ENCODE measurements at regions of chr16 and their contacts with region 1.

Region 1: GRCh38 chr16:11407047-11407982 is 62.1 kb downstream of the RMI2 start:
- DNase-seq: peak; percentile 77
- H3K4me3 Mint-ChIP-seq: no peak overlapping the region
- H3K27ac Mint-ChIP-seq: no peak overlapping the region
- H3K4me1 Mint-ChIP-seq: peaks cover 4% of the 10 kb centered on the region
- H3K27me3 Mint-ChIP-seq: peaks cover 27% of the 10 kb centered on the region

Region 2: DNA sequence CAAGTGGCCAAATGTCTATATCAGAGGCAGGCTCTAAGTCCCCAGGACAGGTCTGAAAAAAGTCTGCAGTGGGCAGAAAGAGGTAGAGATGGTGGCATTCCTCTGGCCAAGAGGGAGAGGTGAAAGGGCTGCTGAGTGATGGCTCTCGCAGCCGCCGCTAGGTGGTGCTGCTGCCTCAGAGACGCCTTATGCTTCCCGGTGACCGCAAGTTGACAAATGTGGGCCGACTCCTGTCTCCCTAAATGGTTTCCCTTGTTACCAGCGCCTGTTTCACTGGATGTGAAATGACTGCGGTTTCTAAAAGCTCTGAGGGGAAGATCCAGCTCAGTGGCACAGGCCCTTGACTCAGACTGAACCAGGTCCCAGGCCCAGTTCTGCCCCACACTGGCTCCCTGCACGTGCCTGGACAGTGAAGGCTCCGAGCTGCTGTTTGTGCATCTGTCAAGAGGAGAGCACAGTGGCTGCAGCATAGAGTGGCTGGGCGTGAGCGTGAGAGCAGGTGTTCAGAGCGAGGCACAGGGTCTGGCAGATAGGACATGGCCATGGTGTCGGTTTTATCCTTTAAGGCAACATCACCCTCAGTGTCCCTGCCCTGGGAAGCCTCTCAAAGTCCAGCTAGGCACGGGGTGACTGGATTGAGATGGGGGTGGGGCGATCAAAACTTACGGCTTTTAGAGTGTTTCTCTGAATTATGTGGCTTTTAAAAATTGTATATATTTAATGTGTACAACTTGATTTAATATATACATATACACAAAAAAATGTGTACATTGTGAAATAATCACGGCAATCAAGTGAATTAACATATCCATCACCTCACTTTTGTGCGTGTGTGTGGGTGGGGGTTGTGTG is 443.1 kb before region 1 on chr16:
- CTCF ChIA-PET with region 1: interaction called, 68 read pairs
- DNase-seq: peak; percentile 89
- H3K4me3 Mint-ChIP-seq: peak overlapping the region; percentile 36
- H3K27ac Mint-ChIP-seq: peak overlapping the region; percentile 90
- H3K4me1 Mint-ChIP-seq: peaks cover 69% of the 10 kb centered on the region
- H3K27me3 Mint-ChIP-seq: no peaks in the 10 kb centered on the region

Region 3: GRCh38 chr16:11370084-11370931 is 37.0 kb before region 1 on chr16:
- CTCF ChIA-PET with region 1: interaction called, 15 read pairs
- DNase-seq: peak; percentile 34
- H3K4me3 Mint-ChIP-seq: no peak overlapping the region
- H3K27ac Mint-ChIP-seq: no peak overlapping the region
- H3K4me1 Mint-ChIP-seq: peaks cover 22% of the 10 kb centered on the region
- H3K27me3 Mint-ChIP-seq: peaks cover 20% of the 10 kb centered on the region

Region 4: DNA sequence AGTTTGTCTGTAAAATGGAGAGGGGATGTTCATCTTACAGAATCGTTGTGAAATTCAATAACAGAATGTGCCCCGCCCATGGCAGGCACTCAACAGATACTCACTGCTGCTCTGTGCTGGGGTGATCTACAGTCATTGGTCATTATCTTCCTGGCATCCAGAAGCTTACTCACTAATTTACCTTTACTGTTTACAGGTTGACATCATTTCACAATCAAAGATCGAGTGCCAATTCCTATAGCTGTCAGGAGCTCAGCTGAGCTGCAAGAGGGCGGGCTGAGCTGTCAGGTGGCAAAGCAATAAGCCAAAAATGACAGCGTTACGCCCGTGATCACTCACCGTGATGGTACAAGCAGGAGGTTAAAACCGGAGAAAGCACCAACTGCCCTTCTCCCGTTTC is 128.2 kb after region 1 on chr16:
- CTCF ChIA-PET with region 1: interaction called, 26 read pairs
- DNase-seq: no peak
- H3K4me3 Mint-ChIP-seq: no peak overlapping the region
- H3K27ac Mint-ChIP-seq: no peak overlapping the region
- H3K4me1 Mint-ChIP-seq: peaks cover 7% of the 10 kb centered on the region
- H3K27me3 Mint-ChIP-seq: peaks cover 4% of the 10 kb centered on the region

Region 5: GRCh38 chr16:11586856-11587642 is 179.7 kb after region 1 on chr16 and contains the start of gene LITAF:
- CTCF ChIA-PET with region 1: no interaction called
- DNase-seq: peak; percentile 75
- H3K4me3 Mint-ChIP-seq: peak within 1 kb of the TSS; percentile 99
- H3K27ac Mint-ChIP-seq: peak within 1 kb of the TSS; percentile 94
- H3K4me1 Mint-ChIP-seq: peaks cover 42% of the 10 kb centered on the region
- H3K27me3 Mint-ChIP-seq: peaks cover 32% of the 10 kb centered on the region

Region 6: DNA sequence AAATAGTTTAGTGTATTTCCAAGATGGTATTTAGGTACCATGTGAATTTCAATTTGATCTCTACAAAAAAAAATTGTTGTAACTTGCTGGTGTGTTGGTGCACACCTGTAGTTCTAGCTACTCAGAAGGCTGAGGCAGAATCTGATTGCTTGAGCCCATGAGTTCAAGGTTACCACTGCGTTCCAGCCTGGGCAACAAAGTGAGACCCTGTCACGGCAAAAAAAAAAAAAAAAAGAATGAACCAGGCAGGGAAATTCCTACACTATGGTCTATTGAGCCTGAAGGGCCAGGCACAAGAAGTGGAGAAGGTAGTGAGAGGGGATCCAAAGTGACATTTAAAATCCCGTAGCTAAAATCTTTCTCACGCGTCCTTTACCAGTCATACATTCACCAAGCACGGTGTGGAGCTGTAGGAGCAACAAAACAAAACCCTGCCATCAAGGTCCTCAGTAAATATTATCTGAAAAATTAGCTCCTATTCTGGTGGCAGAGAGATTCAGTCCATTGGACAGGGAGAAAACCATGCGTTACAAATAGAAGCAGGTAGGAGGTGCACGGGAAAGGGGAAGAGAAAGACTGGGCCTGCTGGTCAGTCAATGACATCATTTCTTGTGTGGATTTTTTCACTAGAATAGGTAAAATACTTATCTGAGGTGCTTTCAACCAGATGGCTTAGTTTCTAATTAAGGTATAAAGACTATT is 308.1 kb after region 1 on chr16:
- CTCF ChIA-PET with region 1: interaction called, 17 read pairs
- DNase-seq: no peak
- H3K4me3 Mint-ChIP-seq: no peak overlapping the region
- H3K27ac Mint-ChIP-seq: no peak overlapping the region
- H3K4me1 Mint-ChIP-seq: peaks cover 5% of the 10 kb centered on the region
- H3K27me3 Mint-ChIP-seq: no peaks in the 10 kb centered on the region